ENCODE measurements at regions of chr17 and their contacts with region 1.

Region 1: GRCh38 chr17:56679115-56679766 is 85.7 kb downstream of the NOG start:
- DNase-seq: peak; percentile 19
- ATAC-seq: peak; percentile 34
- H3K4me3 Mint-ChIP-seq: peak overlapping the region; percentile 63
- H3K27ac Mint-ChIP-seq: no peak overlapping the region
- H3K4me1 Mint-ChIP-seq: peaks cover 24% of the 10 kb centered on the region
- H3K27me3 Mint-ChIP-seq: peaks cover 42% of the 10 kb centered on the region

Region 2: DNA sequence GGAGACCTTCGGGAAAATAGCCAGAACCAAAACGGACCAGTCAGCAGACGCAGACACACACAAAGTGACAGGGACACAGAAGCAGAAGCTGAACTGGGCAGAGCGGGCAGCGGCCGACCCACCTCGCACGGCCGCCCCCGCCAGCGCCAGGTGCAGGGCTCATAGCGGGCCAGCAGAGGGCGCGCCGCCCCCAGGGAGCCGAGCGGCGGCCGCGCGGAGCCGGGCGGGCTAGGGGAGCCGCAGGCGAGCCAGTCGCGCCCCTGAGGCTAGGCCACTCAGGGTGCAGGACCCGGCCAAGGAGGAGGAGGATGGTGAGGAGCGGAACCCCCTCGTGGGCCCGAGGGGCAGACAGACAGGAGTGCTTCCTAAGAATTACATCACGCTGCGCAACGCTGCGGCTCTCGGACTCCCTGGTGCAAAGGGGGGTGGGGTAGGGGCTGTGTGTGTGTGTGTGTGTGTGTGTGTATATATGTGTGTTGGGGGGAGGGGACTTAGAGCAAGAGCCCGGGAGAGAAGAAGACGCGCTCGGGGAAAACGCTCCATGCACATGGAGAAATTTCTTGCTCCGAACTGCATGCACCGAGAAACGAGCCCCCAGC is 86.7 kb before region 1 on chr17:
- CTCF ChIA-PET with region 1: interaction called, 7 read pairs
- POLR2A ChIA-PET with region 1: no interaction called
- intact Hi-C with region 1: loop called (anchors 1 kb)
- DNase-seq: peak; percentile 82
- ATAC-seq: peak; percentile 60
- H3K4me3 Mint-ChIP-seq: peak overlapping the region; percentile 64
- H3K27ac Mint-ChIP-seq: no peak overlapping the region
- H3K4me1 Mint-ChIP-seq: peaks cover 20% of the 10 kb centered on the region
- H3K27me3 Mint-ChIP-seq: peaks cover 23% of the 10 kb centered on the region

Region 3: GRCh38 chr17:56762988-56763387 is 83.7 kb after region 1 on chr17:
- CTCF ChIA-PET with region 1: no interaction called
- POLR2A ChIA-PET with region 1: no interaction called
- intact Hi-C with region 1: no loop called
- DNase-seq: no peak
- ATAC-seq: peak; percentile 97
- H3K4me3 Mint-ChIP-seq: peak overlapping the region; percentile 20
- H3K27ac Mint-ChIP-seq: peak overlapping the region; percentile 82
- H3K4me1 Mint-ChIP-seq: peaks cover 22% of the 10 kb centered on the region
- H3K27me3 Mint-ChIP-seq: no peaks in the 10 kb centered on the region

Measured in activated CD4-positive, alpha-beta T cell treated with anti-CD3 and anti-CD28 coated beads for 36 hours (primary cell).